ENCODE measurements at regions of chr21 and their contacts with region 1.

Region 1: DNA sequence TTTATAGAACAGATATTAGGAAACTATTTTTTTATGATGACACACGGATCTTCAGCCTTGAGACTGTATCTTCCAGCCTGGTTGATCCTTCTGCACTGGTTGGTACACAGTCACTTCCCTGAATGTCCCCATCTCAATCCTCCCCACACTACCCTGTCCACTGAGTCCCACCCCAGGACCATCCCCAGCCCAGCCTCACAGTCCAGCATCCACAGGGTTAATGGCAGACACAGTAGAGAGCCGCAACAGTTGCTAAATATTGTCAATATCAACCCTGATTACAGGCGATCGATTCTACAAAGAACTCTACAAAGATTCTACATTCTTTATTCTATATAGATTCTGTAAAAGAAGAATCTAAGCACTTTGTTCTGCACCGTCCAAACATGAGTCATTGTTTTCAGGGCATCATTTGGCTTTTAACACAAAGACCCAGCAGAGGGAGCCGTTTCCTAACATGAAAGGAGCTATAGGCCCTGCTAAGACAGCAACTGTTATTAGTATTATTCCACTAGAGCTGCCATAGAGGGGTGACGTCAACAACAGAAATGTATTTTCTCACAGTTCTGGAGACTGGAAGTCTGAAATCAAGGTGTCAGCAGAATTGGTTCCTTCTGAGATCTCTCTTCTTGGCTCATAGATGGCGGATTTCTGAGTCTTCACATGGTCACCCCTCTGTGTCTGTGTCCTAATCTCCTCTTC is 30.1 kb upstream of the IFNAR2 start:
- DNase-seq: peak in 1 of 2 donors; percentile 85
- ATAC-seq: peak; percentile 91
- H3K4me3 ChIP-seq: no peak overlapping the region
- H3K27ac ChIP-seq: no peak overlapping the region
- H3K4me1 ChIP-seq: no peaks in the 10 kb centered on the region
- H3K27me3 ChIP-seq: no peaks in the 10 kb centered on the region

Region 2: GRCh38 chr21:32834916-32835235 is 364.8 kb before region 1 on chr21:
- intact Hi-C with region 1: loop called (anchors 5 kb)
- DNase-seq: no peak
- ATAC-seq: no peak
- H3K4me3 ChIP-seq: no peak overlapping the region
- H3K27ac ChIP-seq: no peak overlapping the region
- H3K4me1 ChIP-seq: no peaks in the 10 kb centered on the region
- H3K27me3 ChIP-seq: peaks cover 0 to 3% of the 10 kb centered on the region in 2 donors

Region 3: GRCh38 chr21:32940079-32941014 is 259.3 kb before region 1 on chr21:
- intact Hi-C with region 1: loop called in 1 of 2 experiments (anchors 10 kb)
- DNase-seq: peak in 1 of 2 donors; percentile 51
- ATAC-seq: no peak
- H3K4me3 ChIP-seq: no peak overlapping the region
- H3K27ac ChIP-seq: no peak overlapping the region
- H3K4me1 ChIP-seq: no peaks in the 10 kb centered on the region
- H3K27me3 ChIP-seq: no peaks in the 10 kb centered on the region

Region 4: DNA sequence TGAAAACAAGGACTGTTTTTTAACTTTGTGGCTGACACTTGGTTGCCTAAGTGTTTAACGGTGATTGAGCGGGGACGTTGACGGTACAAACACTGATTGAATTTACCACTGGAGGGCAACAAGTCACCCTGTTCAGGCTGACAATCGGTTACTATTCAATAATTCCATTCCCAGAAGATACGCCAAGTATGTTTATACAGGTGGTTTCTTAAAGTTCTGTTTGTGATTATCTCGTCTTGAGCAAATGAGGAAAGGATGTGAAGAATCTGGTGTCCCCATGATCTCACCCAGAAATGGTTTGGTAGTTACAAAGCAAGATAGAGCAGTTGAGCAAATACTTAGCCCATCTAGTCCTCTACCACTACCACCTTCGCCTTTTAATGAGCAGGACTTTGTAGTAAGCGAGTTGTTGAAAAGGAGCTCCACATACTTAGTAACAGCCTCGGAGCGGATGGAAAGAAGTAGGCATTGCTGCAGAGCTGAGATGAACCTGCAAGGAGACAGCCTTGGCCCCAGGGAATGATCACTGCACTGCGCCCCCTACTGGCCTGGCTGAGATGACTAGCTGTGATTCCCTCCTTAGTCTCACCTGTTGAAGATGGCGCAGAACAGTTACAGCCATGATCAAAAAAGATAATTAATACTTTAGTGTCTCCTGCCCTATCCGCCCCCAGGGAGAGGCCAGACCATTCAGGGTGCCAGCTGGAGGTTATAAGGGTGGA is 161.4 kb after region 1 on chr21:
- intact Hi-C with region 1: loop called in 1 of 2 experiments (anchors 5 kb)
- DNase-seq: peak; percentile 83 to 89
- ATAC-seq: peak; percentile 87
- H3K4me3 ChIP-seq: no peak overlapping the region
- H3K27ac ChIP-seq: no peak overlapping the region
- H3K4me1 ChIP-seq: peaks cover 0 to 5% of the 10 kb centered on the region in 2 donors
- H3K27me3 ChIP-seq: no peaks in the 10 kb centered on the region

Region 5: GRCh38 chr21:33380483-33380998 is 180.9 kb after region 1 on chr21:
- intact Hi-C with region 1: loop called in 1 of 2 experiments (anchors 5 kb)
- DNase-seq: peak; percentile 96 to 97
- ATAC-seq: peak; percentile 94
- H3K4me3 ChIP-seq: no peak overlapping the region
- H3K27ac ChIP-seq: peak overlapping the region; percentile 34 to 47
- H3K4me1 ChIP-seq: no peaks in the 10 kb centered on the region
- H3K27me3 ChIP-seq: no peaks in the 10 kb centered on the region

Region 6: GRCh38 chr21:33441489-33442477 is 242.1 kb after region 1 on chr21:
- intact Hi-C with region 1: loop called (anchors 2 to 5 kb)
- DNase-seq: peak in 1 of 2 donors; percentile 68
- ATAC-seq: peak; percentile 37
- H3K4me3 ChIP-seq: no peak overlapping the region
- H3K27ac ChIP-seq: peak overlapping the region in 1 of 2 donors; percentile 5
- H3K4me1 ChIP-seq: no peaks in the 10 kb centered on the region
- H3K27me3 ChIP-seq: no peaks in the 10 kb centered on the region

Measured in aorta (tissue), 5 donors.